Ovary (tissue), 10 donors: ENCODE measurements at regions of chr15 and their contacts with region 1.

Region 1: GRCh38 chr15:92521624-92522008 is 127.9 kb downstream of the ST8SIA2 start:
- DNase-seq: peak; percentile 81 to 92 (median 83)
- H3K4me3 ChIP-seq: no peak overlapping the region
- H3K27ac ChIP-seq: no peak overlapping the region
- H3K4me1 ChIP-seq: no peaks in the 10 kb centered on the region
- H3K27me3 ChIP-seq: no peaks in the 10 kb centered on the region
- CTCF ChIP-seq: peak; percentile 49 to 96 (median 89)
- EP300 ChIP-seq: no peak
- POLR2A ChIP-seq: peak; percentile 8

Region 2: GRCh38 chr15:92473756-92474155 is 47.9 kb before region 1 on chr15:
- intact Hi-C with region 1: no loop called
- DNase-seq: no peak
- H3K4me3 ChIP-seq: no peak overlapping the region
- H3K27ac ChIP-seq: no peak overlapping the region
- H3K4me1 ChIP-seq: no peaks in the 10 kb centered on the region
- H3K27me3 ChIP-seq: no peaks in the 10 kb centered on the region
- CTCF ChIP-seq: no peak
- EP300 ChIP-seq: no peak
- POLR2A ChIP-seq: no peak

Region 3: GRCh38 chr15:92683232-92683834 is 161.7 kb after region 1 on chr15:
- intact Hi-C with region 1: loop called (anchors 5 to 10 kb)
- DNase-seq: peak in 4 of 5 donors; percentile 42 to 75 (median 58)
- H3K4me3 ChIP-seq: no peak overlapping the region
- H3K27ac ChIP-seq: no peak overlapping the region
- H3K4me1 ChIP-seq: no peaks in the 10 kb centered on the region
- H3K27me3 ChIP-seq: no peaks in the 10 kb centered on the region
- CTCF ChIP-seq: peak; percentile 19 to 77 (median 53)
- EP300 ChIP-seq: no peak
- POLR2A ChIP-seq: peak; percentile 22